ENCODE measurements at regions of chr17 and their contacts with region 1.

Region 1: DNA sequence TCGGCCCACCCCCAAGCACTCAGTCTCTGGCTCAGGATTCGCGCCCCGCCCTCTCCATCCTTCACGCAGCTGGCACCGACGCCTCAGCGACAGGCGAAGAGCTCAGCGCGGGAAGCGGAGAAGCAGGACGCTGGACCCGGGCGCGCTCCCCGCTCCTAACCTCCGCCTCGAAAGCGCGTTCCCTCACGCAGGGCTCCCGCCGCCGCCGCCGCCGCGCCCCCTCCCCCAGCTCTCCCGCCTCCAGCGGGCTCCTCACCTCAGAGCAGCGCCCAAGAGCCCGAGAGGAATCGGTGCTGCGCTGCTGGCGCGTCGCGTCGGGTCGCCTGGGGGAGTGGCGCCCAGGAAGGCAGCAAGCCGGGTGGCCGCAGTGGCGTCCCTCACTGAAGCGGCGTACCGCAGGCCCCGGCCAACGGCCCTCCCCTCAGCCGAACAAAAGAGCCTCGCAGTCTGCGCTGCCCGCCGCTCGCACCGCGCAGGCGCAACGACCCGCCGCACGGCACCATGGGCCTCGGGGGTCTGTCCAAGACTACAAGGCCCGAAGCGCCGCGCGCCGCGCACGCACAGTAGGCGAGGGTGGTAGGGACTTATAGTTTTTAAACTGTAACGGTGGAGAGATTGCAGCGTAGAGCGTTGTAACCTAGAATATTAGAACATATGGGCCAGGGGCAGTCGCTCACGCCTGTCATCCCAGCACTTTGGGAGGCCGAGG is at the start of gene CBX1:
- DNase-seq: peak; percentile 91
- H3K4me3 Mint-ChIP-seq: peak within 1 kb of the TSS; percentile 92
- H3K27ac Mint-ChIP-seq: peak within 1 kb of the TSS; percentile 20
- H3K4me1 Mint-ChIP-seq: peaks cover 10% of the 10 kb centered on the region
- H3K27me3 Mint-ChIP-seq: no peaks in the 10 kb centered on the region
- CTCF ChIP-seq: no peak
- total RNA-seq, gene CBX1: 77.3 and 81.2 TPM in 2 replicates

Region 2: GRCh38 chr17:47862621-47863440 is 238.3 kb before region 1 on chr17:
- CTCF ChIA-PET with region 1: no interaction called
- POLR2A ChIA-PET with region 1: no interaction called
- intact Hi-C with region 1: no loop called
- DNase-seq: peak; percentile 53
- H3K4me3 Mint-ChIP-seq: no peak overlapping the region
- H3K27ac Mint-ChIP-seq: peak overlapping the region; percentile 4
- H3K4me1 Mint-ChIP-seq: peaks cover 21% of the 10 kb centered on the region
- H3K27me3 Mint-ChIP-seq: no peaks in the 10 kb centered on the region
- CTCF ChIP-seq: no peak

Region 3: DNA sequence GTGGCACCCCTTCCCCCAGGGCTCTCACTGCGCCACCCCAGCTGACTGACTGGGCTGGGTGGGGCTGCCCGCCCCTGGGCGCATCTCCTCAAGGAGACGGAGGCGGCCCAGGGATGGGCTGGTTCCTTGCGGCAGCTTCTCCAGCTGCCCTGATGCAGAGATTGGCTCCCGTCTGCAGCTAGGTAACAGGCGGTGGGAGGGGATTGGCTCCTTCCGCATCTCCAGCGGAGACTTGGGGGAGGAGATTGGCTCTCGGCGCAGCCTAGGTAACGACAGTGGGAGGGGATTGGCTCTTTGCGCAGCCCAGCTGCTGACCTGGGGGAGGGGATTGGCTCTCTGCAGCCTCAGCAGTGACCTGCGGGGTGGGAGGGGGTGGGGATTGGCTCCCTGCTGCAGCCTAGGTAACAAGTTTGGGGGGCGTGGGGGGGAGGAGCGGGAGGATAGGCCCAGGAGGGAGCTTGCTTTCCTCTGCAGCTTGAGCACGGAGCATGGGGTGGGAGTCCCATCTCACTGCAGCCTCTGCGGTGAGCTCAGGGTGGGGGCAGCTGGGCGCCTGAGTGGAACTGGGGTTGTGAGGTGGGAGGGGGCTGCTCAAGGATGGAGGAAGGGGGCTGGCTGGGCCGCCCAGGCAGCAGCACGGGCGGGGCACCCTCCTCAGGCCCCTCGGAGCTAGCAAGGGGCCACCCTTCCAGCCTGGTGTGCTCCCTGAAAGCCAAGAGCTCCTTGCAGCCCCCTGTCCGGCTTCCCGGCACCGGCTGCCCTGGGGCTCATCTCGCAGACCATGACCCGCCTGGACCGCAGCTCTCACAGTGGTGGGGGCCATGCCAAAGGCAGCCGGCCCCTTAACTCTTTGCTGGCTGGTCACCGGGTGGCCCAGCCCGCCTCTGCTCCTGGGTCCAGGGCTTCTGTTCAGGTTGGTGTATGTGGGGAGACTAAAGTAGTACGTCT is 46.7 kb before region 1 on chr17:
- CTCF ChIA-PET with region 1: no interaction called
- POLR2A ChIA-PET with region 1: interaction called, 73 read pairs
- intact Hi-C with region 1: loop called (anchors 2 kb)
- DNase-seq: peak; percentile 76
- H3K4me3 Mint-ChIP-seq: peak overlapping the region; percentile 91
- H3K27ac Mint-ChIP-seq: peak overlapping the region; percentile 93
- H3K4me1 Mint-ChIP-seq: peaks cover 67% of the 10 kb centered on the region
- H3K27me3 Mint-ChIP-seq: no peaks in the 10 kb centered on the region
- CTCF ChIP-seq: no peak

Region 4: DNA sequence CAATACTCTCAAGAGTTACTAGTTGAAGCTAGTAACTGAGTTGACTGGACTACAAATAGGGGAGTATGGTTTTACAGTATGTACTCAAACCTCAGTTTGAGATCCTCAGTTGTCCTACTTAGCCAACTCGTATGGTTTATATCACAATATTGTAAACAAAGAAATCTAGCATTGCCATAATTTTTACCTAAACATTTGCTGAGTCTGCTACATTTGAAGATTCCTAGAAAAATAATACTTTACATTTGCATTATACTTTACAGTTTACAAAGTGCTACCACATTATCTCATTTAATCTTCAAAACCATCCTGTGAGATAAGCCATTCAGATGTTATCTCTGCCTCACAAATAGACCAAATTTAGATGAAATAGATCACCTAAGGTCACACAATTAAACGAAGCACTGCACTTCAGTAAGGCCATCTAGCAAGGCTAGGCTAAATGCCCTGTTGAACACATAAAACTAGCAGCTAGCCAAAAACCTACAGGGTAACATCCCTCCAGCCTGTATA is 16.2 kb before region 1 on chr17:
- CTCF ChIA-PET with region 1: interaction called, 60 read pairs
- POLR2A ChIA-PET with region 1: interaction called, 15 read pairs
- intact Hi-C with region 1: no loop called
- DNase-seq: no peak
- H3K4me3 Mint-ChIP-seq: no peak overlapping the region
- H3K27ac Mint-ChIP-seq: no peak overlapping the region
- H3K4me1 Mint-ChIP-seq: no peaks in the 10 kb centered on the region
- H3K27me3 Mint-ChIP-seq: no peaks in the 10 kb centered on the region
- CTCF ChIP-seq: no peak

Region 5: GRCh38 chr17:48131216-48131824 is 30.2 kb after region 1 on chr17:
- CTCF ChIA-PET with region 1: interaction called, 12 read pairs
- POLR2A ChIA-PET with region 1: interaction called, 25 read pairs
- intact Hi-C with region 1: no loop called
- DNase-seq: peak; percentile 85
- H3K4me3 Mint-ChIP-seq: no peak overlapping the region
- H3K27ac Mint-ChIP-seq: no peak overlapping the region
- H3K4me1 Mint-ChIP-seq: peaks cover 13% of the 10 kb centered on the region
- H3K27me3 Mint-ChIP-seq: no peaks in the 10 kb centered on the region
- CTCF ChIP-seq: peak; percentile 76

Measured in MCF 10A (cell line).